CD8-positive, alpha-beta T cell (primary cell): ENCODE measurements at regions of chr17 and their contacts with region 1.

Region 1: DNA sequence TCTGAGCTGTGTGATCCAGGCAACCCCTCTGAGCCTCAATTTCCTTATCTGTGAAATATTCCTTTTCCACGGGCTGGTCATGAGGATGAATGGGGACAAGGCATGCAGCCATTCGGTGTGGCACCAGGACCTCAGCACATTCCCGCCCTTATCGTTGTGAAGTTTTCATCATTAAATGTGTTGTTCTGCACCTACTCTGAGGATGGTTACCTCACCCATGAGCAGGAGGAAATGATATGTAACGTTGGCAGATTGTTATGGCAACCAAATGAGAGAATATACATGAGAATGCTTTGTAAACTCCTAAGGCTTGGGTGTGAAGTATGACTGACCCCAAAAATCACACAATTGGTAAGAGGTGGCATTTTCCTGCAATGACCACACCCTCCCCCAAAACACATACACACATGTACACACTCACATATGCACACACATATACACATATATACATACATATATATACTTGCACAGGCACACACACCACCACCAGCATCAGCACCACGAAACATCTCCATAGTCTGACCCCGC is 39.5 kb downstream of the SMARCE1 start:
- DNase-seq: peak in 4 of 9 experiments; percentile 42 to 94 (median 76)
- ATAC-seq: peak; percentile 56
- H3K4me3 ChIP-seq: peak overlapping the region; percentile 22 to 43
- H3K4me3 Mint-ChIP-seq: peak overlapping the region; percentile 66
- H3K27ac ChIP-seq: peak overlapping the region; percentile 92 to 99
- H3K27ac Mint-ChIP-seq: peak overlapping the region; percentile 98
- H3K4me1 ChIP-seq: peaks cover 97% of the 10 kb centered on the region
- H3K4me1 Mint-ChIP-seq: peaks cover 96% of the 10 kb centered on the region
- H3K27me3 ChIP-seq: no peaks in the 10 kb centered on the region
- H3K27me3 Mint-ChIP-seq: no peaks in the 10 kb centered on the region
- CTCF ChIP-seq: no peak

Region 2: DNA sequence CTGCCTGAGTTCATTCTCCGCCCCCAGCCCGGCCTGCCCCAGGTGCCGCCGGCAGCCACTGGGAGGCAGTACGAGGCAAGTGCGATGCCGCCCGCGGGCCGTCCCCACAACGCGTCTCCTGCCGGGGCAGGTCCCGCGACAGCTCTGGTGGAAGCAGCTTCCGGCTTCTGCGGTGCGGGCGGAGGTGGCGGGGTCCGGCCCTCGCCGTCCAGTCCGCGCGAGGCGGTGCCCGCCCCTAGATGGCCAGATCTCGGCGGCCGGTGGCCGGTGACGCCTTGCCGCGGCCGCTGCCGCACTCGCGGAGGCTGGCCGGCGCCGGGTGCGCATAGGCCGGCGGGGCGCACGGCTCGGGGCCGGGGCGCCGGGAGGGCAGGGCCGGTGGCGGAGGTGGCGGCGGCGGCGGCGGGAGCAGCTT is 245.4 kb before region 1 on chr17:
- CTCF ChIA-PET with region 1: no interaction called
- POLR2A ChIA-PET with region 1: no interaction called
- intact Hi-C with region 1: no loop called
- DNase-seq: peak; percentile 55 to 82 (median 77)
- ATAC-seq: peak; percentile 79
- H3K4me3 ChIP-seq: peak overlapping the region in 1 of 2 experiments; percentile 20
- H3K4me3 Mint-ChIP-seq: peak overlapping the region; percentile 78
- H3K27ac ChIP-seq: no peak overlapping the region
- H3K27ac Mint-ChIP-seq: no peak overlapping the region
- H3K4me1 ChIP-seq: peaks cover 15% of the 10 kb centered on the region
- H3K4me1 Mint-ChIP-seq: peaks cover 10% of the 10 kb centered on the region
- H3K27me3 ChIP-seq: peaks cover 0 to 6% of the 10 kb centered on the region in 2 experiments
- H3K27me3 Mint-ChIP-seq: peaks cover 6% of the 10 kb centered on the region
- CTCF ChIP-seq: peak; percentile 62

Region 3: DNA sequence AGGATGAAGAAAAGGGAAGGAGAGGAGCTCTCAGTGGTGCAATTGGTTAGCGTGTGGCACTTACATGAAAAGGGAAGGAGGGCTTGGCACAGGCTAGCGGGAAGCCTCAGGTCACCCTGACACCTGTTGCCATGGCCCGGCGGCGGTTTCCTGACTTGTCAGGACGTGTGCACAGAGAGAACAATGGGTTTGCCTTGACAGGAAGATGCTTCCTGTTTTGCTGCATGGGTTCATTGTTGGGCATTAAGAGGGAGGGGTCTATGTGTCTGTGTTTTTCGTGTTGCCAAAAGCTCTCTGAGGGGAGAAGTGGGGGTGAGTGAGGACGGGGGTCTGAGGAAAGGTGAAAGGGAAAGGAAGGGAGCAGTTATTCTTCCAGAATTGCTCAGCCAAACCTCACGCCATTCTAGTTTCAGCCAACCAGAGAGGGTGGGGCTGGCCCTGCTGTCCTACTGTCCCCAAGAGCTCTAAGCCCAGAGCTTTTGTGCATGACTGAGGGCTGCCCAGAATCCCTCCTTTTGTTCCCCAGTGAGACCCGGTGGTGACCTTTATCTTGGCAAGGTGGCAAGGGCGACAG is 25.7 kb before region 1 on chr17:
- CTCF ChIA-PET with region 1: interaction called, 7 read pairs
- POLR2A ChIA-PET with region 1: interaction called, 31 read pairs
- intact Hi-C with region 1: no loop called
- DNase-seq: peak; percentile 48 to 90 (median 77)
- ATAC-seq: peak; percentile 85
- H3K4me3 ChIP-seq: peak overlapping the region; percentile 15 to 17
- H3K4me3 Mint-ChIP-seq: peak overlapping the region; percentile 79
- H3K27ac ChIP-seq: peak overlapping the region; percentile 60 to 74
- H3K27ac Mint-ChIP-seq: peak overlapping the region; percentile 94
- H3K4me1 ChIP-seq: peaks cover 86% of the 10 kb centered on the region
- H3K4me1 Mint-ChIP-seq: peaks cover 95% of the 10 kb centered on the region
- H3K27me3 ChIP-seq: no peaks in the 10 kb centered on the region
- H3K27me3 Mint-ChIP-seq: no peaks in the 10 kb centered on the region
- CTCF ChIP-seq: no peak

Region 4: DNA sequence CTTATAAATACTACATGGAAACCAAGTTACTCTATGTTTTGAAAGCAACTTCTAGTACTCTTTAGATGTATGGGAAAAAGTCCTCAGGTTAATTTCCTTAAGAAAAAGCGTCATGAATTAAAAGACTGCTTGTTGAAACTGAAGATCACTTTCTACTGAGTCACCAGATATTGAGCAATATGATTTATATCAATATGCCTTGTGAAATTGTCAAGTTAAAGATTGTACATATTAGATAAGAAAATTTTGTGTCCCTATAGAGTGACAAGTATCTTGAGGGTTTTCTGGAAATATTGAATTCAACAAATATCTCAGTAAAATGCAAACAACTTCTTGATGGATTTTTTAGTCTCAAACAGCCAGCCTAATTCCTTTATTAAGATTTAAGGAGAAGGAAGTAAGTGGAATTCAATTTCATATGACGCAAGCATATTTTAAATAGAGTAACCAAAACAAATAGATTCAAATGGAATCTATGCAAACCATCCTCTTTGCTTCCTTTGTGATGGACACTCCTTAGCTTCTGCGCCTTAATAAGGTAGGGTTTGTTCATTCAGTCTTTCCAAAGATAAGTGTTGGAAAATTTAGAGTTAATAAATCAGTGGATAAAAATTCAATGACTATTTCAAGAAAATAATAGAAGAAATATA is 242.3 kb after region 1 on chr17:
- CTCF ChIA-PET with region 1: no interaction called
- POLR2A ChIA-PET with region 1: no interaction called
- intact Hi-C with region 1: no loop called
- DNase-seq: no peak
- ATAC-seq: no peak
- H3K4me3 ChIP-seq: no peak overlapping the region
- H3K4me3 Mint-ChIP-seq: no peak overlapping the region
- H3K27ac ChIP-seq: no peak overlapping the region
- H3K27ac Mint-ChIP-seq: no peak overlapping the region
- H3K4me1 ChIP-seq: no peaks in the 10 kb centered on the region
- H3K4me1 Mint-ChIP-seq: no peaks in the 10 kb centered on the region
- H3K27me3 ChIP-seq: no peaks in the 10 kb centered on the region
- H3K27me3 Mint-ChIP-seq: peaks cover 41% of the 10 kb centered on the region
- CTCF ChIP-seq: no peak